Activated CD8-positive, alpha-beta memory T cell treated with anti-CD3 and anti-CD28 coated beads, Interleukin-2, amount 10 ng/mL, durations not matched to agents 7 days and 5 days (primary cell): ENCODE measurements at regions of chr2 and their contacts with region 1.

Region 1: GRCh38 chr2:62415019-62415431 is 91.0 kb downstream of the TMEM17 start:
- DNase-seq: peak; percentile 46
- ATAC-seq: peak; percentile 62
- H3K4me3 Mint-ChIP-seq: peak overlapping the region; percentile 9
- H3K27ac Mint-ChIP-seq: peak overlapping the region; percentile 73
- H3K4me1 Mint-ChIP-seq: peaks cover 19% of the 10 kb centered on the region
- H3K27me3 Mint-ChIP-seq: peaks cover 5% of the 10 kb centered on the region

Region 2: GRCh38 chr2:61911510-61911909 is 503.5 kb before region 1 on chr2:
- CTCF ChIA-PET with region 1: interaction called, 11 read pairs
- DNase-seq: no peak
- ATAC-seq: peak; percentile 47
- H3K4me3 Mint-ChIP-seq: no peak overlapping the region
- H3K27ac Mint-ChIP-seq: no peak overlapping the region
- H3K4me1 Mint-ChIP-seq: peaks cover 13% of the 10 kb centered on the region
- H3K27me3 Mint-ChIP-seq: no peaks in the 10 kb centered on the region

Region 3: GRCh38 chr2:61993444-61994024 is 421.5 kb before region 1 on chr2:
- CTCF ChIA-PET with region 1: interaction called, 55 read pairs
- DNase-seq: peak; percentile 49
- ATAC-seq: peak; percentile 64
- H3K4me3 Mint-ChIP-seq: no peak overlapping the region
- H3K27ac Mint-ChIP-seq: no peak overlapping the region
- H3K4me1 Mint-ChIP-seq: peaks cover 8% of the 10 kb centered on the region
- H3K27me3 Mint-ChIP-seq: no peaks in the 10 kb centered on the region

Region 4: DNA sequence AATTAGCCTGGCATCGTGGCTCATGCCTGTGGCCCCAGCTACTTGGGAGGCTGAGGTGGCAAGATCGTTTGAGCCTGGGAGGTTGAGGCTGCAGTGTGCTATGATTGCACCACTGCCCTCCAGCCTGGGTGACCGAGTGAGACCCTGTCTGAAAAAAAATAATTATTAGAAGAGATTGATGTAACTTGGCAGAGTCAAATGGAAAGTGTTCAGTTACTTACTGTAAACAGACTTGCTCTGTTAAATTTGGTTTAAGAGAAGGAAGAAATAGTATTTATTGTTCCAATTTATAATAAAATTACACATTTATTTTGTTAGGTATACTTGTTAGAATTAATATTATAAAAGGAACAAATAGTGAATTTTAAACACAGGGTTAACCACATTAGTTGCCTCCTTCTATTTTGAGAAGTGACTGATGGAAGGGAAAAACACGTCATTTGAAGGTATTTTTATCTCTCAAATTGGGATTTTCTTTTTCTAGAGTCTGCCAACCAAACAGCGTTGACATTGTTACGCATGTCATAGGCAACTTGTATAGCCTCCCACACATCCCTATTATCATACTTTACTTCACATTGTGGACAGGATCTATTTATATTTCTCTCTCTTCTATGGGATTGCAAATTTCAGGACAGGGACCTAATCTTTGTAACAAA is 337.9 kb before region 1 on chr2:
- CTCF ChIA-PET with region 1: no interaction called
- DNase-seq: no peak
- ATAC-seq: no peak
- H3K4me3 Mint-ChIP-seq: no peak overlapping the region
- H3K27ac Mint-ChIP-seq: no peak overlapping the region
- H3K4me1 Mint-ChIP-seq: no peaks in the 10 kb centered on the region
- H3K27me3 Mint-ChIP-seq: no peaks in the 10 kb centered on the region

Region 5: GRCh38 chr2:62178741-62179271 is 236.2 kb before region 1 on chr2:
- CTCF ChIA-PET with region 1: no interaction called
- DNase-seq: no peak
- ATAC-seq: no peak
- H3K4me3 Mint-ChIP-seq: no peak overlapping the region
- H3K27ac Mint-ChIP-seq: no peak overlapping the region
- H3K4me1 Mint-ChIP-seq: no peaks in the 10 kb centered on the region
- H3K27me3 Mint-ChIP-seq: no peaks in the 10 kb centered on the region

Region 6: GRCh38 chr2:62313449-62314227 is 101.4 kb before region 1 on chr2:
- CTCF ChIA-PET with region 1: interaction called, 10 read pairs
- DNase-seq: peak; percentile 92
- ATAC-seq: peak; percentile 83
- H3K4me3 Mint-ChIP-seq: peak overlapping the region; percentile 59
- H3K27ac Mint-ChIP-seq: peak overlapping the region; percentile 90
- H3K4me1 Mint-ChIP-seq: peaks cover 54% of the 10 kb centered on the region
- H3K27me3 Mint-ChIP-seq: no peaks in the 10 kb centered on the region